CD14-positive monocyte (primary cell): ENCODE measurements at regions of chr5 and their contacts with region 1.

Region 1: DNA sequence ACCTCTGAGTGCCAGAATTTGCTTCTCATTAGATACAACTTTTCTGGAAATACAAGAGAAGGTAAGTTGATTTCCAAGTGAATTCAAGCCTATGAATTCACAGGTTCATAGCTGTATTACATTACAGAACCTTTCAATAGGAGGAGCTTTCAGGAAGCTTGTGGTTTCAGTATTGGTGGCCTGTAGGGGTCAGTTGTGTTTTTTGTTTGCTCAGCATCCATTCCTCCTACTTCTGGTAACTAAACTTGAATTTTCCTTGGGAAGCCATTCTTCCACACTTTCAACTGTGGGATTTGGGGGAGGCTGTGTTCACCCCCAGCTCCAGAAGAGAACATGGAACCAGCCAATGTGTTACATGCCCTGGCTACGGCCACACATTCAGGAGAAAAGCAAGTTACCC is 5.6 kb upstream of the CYSTM1 start:
- DNase-seq: no peak
- H3K4me3 ChIP-seq: no peak overlapping the region
- H3K4me3 Mint-ChIP-seq: no peak overlapping the region
- H3K27ac ChIP-seq: no peak overlapping the region
- H3K27ac Mint-ChIP-seq: no peak overlapping the region
- H3K4me1 ChIP-seq: peaks cover 20 to 26% of the 10 kb centered on the region in 2 donors
- H3K4me1 Mint-ChIP-seq: peaks cover 22% of the 10 kb centered on the region
- H3K27me3 ChIP-seq: no peaks in the 10 kb centered on the region
- H3K27me3 Mint-ChIP-seq: peaks cover 0 to 8% (median 5%) of the 10 kb centered on the region in 3 donors
- CTCF ChIP-seq: no peak

Region 2: DNA sequence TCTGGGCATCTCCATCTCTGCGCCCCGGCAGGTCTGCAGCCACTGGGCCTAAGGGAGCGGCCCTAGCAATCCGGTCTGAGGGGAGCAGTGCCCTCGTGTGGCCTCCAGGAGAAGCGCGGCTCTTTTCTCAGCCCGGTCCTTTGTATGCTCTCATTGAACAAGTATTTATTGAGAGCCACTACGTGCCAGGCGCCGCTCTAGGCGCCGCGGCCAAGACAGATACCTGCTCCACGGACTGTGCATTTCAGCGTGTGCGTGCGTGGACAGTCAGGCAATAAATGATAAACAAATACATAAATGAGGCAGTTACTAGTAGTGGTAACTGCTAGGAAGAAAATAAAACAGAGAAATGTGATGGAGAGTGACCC is 188.3 kb after region 1 on chr5:
- intact Hi-C with region 1: loop called in 1 of 2 experiments (anchors 10 kb)
- DNase-seq: peak; percentile 73 to 83 (median 80)
- H3K4me3 ChIP-seq: peak overlapping the region in 1 of 3 experiments; percentile 34
- H3K4me3 Mint-ChIP-seq: peak overlapping the region; percentile 62 to 82
- H3K27ac ChIP-seq: no peak overlapping the region
- H3K27ac Mint-ChIP-seq: peak overlapping the region; percentile 36 to 91 (median 76)
- H3K4me1 ChIP-seq: peaks cover 31 to 36% of the 10 kb centered on the region in 2 donors
- H3K4me1 Mint-ChIP-seq: peaks cover 31% of the 10 kb centered on the region
- H3K27me3 ChIP-seq: no peaks in the 10 kb centered on the region
- H3K27me3 Mint-ChIP-seq: peaks cover 2 to 6% (median 6%) of the 10 kb centered on the region in 3 donors
- CTCF ChIP-seq: peak; percentile 89